ENCODE measurements at regions of chr5 and their contacts with region 1.

Region 1: GRCh38 chr5:176573564-176574296 is 24.6 kb downstream of the CDHR2 start:
- DNase-seq: peak; percentile 79
- ATAC-seq: peak; percentile 89
- H3K4me3 Mint-ChIP-seq: no peak overlapping the region
- H3K27ac Mint-ChIP-seq: no peak overlapping the region
- H3K4me1 Mint-ChIP-seq: peaks cover 7% of the 10 kb centered on the region
- H3K27me3 Mint-ChIP-seq: peaks cover 10% of the 10 kb centered on the region

Region 2: DNA sequence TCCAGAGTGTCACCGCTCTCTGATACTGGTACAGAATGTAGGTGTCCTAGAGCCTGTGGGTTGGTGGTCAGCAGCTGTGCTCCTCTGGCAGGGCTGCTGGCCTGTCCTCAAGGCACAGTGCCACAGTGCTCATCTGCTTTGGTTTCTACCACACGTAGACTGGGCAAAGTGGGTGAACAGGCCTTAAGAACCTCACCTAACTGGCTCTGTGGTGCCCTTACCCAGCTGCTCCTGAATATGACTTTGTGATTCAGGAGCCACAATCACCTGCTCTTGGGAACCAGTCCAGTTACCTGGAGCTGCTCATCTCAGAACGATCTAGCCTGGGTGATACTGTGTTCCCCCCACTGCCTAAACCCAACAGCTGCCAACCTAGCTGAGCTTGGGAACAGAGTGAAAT is 191.8 kb before region 1 on chr5:
- CTCF ChIA-PET with region 1: no interaction called
- DNase-seq: no peak
- ATAC-seq: no peak
- H3K4me3 Mint-ChIP-seq: no peak overlapping the region
- H3K27ac Mint-ChIP-seq: no peak overlapping the region
- H3K4me1 Mint-ChIP-seq: peaks cover 22% of the 10 kb centered on the region
- H3K27me3 Mint-ChIP-seq: no peaks in the 10 kb centered on the region

Region 3: GRCh38 chr5:176429972-176430371 is 143.8 kb before region 1 on chr5:
- CTCF ChIA-PET with region 1: no interaction called
- DNase-seq: no peak
- ATAC-seq: peak; percentile 30
- H3K4me3 Mint-ChIP-seq: no peak overlapping the region
- H3K27ac Mint-ChIP-seq: peak overlapping the region; percentile 54
- H3K4me1 Mint-ChIP-seq: peaks cover 6% of the 10 kb centered on the region
- H3K27me3 Mint-ChIP-seq: peaks cover 2% of the 10 kb centered on the region

Region 4: GRCh38 chr5:176596689-176597416 is 23.1 kb after region 1 on chr5:
- CTCF ChIA-PET with region 1: interaction called, 11 read pairs
- DNase-seq: peak; percentile 67
- ATAC-seq: peak; percentile 89
- H3K4me3 Mint-ChIP-seq: peak overlapping the region; percentile 57
- H3K27ac Mint-ChIP-seq: no peak overlapping the region
- H3K4me1 Mint-ChIP-seq: peaks cover 13% of the 10 kb centered on the region
- H3K27me3 Mint-ChIP-seq: peaks cover 5% of the 10 kb centered on the region

Measured in activated CD8-positive, alpha-beta memory T cell treated with anti-CD3 and anti-CD28 coated beads, Interleukin-2, amount 10 ng/mL, durations not matched to agents 7 days and 5 days (primary cell).